Activated T-helper 1 cell treated with anti-CD3 and anti-CD28 coated beads, Interleukin-12 subunit alpha, Interleukin-12 subunit beta, Interleukin-2, Interleukin-4 antibody, amounts not matched to agents 30 ng/mL and 10 ng/mL and 1 ng/mL, durations not matched to agents 14 hours and 24 hours and 36 hours (primary cell): ENCODE measurements at regions of chr4 and their contacts with region 1.

Region 1: DNA sequence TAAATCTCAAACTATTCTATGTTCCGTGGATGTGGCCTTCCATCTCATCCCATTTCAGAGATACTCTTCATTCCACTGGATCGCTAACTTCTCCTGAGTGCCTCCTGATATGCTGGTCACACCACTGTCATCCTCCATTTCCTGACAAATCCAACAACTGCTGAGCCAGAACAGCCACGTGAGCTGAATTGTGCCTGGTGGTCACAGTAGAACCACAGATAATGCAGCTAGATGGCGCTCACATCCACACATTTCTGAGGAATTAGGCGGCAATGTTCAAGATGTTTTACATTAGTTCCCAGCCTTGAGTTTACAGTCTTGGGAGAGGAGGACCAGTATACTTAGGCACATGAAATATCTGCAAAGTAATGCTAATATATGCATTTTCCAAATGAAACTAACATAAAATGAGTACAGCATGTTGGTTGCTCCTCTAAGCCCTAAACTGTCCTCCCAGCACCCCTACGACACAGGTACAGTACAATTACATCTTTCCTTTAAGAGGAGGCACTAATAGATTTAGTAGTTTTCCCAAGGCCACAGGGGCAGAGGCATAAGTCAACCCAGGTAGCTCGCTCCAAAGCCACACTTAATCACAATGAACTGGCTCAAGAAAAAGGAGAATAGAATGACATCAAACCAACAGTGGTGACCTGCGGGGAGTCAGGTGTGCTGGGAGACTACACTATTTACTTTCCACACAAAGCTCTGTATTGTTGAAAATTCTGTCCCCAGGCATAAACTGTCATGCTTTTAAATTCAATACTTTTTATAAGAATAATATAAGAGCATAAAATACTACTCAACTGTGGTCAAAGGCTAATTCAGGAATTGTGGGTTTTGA is 134.2 kb downstream of the CHIC2 start:
- DNase-seq: peak; percentile 14
- H3K4me3 Mint-ChIP-seq: no peak overlapping the region
- H3K27ac Mint-ChIP-seq: no peak overlapping the region
- H3K4me1 Mint-ChIP-seq: no peaks in the 10 kb centered on the region
- H3K27me3 Mint-ChIP-seq: peaks cover 3% of the 10 kb centered on the region

Region 2: GRCh38 chr4:53908661-53909078 is 21.5 kb before region 1 on chr4:
- intact Hi-C with region 1: no loop called
- DNase-seq: no peak
- H3K4me3 Mint-ChIP-seq: no peak overlapping the region
- H3K27ac Mint-ChIP-seq: no peak overlapping the region
- H3K4me1 Mint-ChIP-seq: peaks cover 17% of the 10 kb centered on the region
- H3K27me3 Mint-ChIP-seq: peaks cover 30% of the 10 kb centered on the region

Region 3: GRCh38 chr4:54091637-54092404 is 161.6 kb after region 1 on chr4:
- intact Hi-C with region 1: loop called (anchors 2 kb)
- DNase-seq: peak; percentile 71
- H3K4me3 Mint-ChIP-seq: peak overlapping the region; percentile 82
- H3K27ac Mint-ChIP-seq: peak overlapping the region; percentile 30
- H3K4me1 Mint-ChIP-seq: peaks cover 30% of the 10 kb centered on the region
- H3K27me3 Mint-ChIP-seq: peaks cover 74% of the 10 kb centered on the region

Region 4: DNA sequence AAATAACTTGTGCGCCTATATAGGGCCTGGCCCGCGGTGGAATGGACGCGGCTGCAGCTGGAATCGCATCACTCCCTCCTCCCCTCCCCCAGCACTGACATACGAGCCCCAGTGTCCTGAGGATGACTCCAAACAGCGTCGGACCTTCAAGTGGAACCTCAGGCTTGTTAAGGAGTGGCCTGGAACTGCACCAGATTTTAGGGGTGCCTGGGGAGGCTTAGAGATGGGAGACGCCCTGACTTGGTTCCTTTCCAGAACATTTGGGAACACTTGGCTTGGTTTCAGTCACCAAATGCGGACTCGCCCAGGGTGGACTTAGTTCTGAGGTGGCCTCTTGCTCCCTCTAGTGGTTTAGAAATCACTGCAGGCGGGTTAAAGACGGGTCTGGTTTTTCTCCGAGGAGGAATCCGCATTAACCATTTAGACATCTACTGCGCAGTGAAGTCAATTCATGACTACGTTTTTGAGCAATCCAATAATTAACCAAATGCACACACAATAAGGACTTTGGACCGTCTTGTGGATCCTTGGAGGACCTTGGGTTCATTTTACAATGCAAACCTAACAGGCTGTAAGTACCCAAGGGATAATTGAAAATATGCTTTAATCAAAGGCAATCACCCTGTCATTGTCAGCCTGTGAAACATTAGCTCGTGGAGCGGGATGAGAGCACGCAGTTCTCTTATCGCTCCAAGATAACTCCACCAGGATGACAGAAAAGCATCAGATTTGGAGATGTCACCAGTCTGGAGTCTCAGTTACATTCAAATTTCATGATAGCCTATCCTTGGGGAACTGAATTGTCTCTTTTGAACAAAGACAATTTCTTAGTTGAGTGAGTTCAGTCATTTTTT is 287.7 kb after region 1 on chr4:
- intact Hi-C with region 1: loop called (anchors 1 kb)
- DNase-seq: peak; percentile 19
- H3K4me3 Mint-ChIP-seq: no peak overlapping the region
- H3K27ac Mint-ChIP-seq: no peak overlapping the region
- H3K4me1 Mint-ChIP-seq: peaks cover 4% of the 10 kb centered on the region
- H3K27me3 Mint-ChIP-seq: peaks cover 23% of the 10 kb centered on the region